ENCODE measurements at regions of chr11 and their contacts with region 1.

Region 1: DNA sequence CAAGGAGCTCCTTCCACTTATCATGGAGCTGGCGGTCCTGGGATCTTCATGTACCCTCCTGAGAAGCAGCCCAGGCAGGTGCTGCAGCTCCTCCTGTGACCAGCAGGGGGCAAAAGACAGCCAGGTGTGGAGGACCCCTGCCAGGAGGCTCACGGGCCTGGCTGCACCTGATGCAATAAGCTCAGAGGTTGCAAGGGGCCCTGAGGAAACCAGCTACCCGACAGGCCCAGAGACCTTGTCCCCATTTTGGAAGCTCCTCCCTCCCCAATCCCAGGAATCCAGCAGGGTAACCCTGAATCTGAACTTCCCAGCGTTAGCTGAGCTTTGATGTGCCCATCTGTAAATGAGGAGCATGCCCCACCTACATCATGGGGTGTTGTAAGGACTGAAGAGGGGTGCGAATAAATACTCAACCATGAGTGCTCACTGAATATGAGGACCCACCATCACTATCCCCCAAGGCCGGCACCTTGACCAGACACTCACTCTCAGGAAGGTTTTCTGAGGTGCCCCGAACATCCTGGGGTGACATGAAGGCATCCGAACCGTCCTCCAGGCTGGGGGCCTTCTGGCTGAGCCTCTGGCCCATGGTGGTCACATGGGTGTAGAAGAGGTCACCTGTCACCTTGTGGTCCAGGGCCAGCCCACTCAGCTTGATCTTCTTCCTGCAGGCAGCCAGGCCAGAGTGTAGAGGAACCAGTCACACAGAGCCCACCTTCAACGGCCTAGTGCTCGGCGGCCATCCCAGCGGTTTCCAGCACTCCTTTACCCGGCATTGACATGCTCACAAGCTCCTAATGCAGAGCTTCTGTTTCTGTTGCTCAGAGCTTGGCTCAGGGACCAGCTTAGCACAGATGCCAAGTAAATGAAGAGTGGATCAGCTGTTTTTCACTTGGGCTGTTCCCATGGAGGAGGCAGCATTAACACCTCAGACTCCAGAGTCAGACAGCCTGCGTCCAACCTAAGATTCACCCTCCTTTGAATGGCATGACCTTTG is 21.7 kb downstream of the SLC43A1 start:
- DNase-seq: peak; percentile 76
- H3K4me3 Mint-ChIP-seq: no peak overlapping the region
- H3K27ac Mint-ChIP-seq: peak overlapping the region; percentile 73
- H3K4me1 Mint-ChIP-seq: peaks cover 12% of the 10 kb centered on the region
- H3K27me3 Mint-ChIP-seq: no peaks in the 10 kb centered on the region

Region 2: DNA sequence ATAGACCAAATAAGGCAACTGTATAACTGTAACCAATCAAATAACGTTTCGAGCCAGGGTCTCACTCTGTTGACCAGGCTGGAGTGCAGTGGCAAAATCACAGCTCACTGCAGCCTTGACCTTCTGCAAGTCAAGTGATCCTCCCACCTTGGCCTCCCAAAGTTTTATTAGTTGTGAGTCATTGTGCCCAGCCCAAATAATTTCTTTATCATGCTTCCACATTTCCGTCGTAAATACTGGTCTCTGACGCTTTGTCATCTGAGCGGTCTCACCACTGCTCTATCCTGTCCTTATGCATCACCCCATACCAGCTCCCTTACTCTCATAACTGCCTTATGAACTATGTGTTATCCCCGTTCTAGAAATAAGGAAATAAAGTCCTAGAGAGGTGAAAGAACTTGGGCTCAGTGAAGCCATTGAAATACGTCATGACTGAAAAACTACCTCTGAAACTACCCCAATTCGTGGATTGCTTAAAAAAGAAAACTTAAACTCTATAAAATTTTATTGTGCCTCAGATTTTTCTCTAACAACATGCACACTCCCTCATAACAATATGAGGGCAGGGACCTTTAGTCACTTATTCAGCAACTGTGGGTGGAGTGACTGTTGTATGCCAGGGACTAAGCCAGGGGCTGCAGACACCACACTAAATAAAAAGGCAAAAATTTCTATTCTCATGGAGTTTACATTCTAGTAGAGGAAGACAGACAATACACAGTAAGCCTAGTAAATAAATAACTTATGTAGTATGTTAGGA is 49.3 kb before region 1 on chr11:
- CTCF ChIA-PET with region 1: interaction called, 11 read pairs
- POLR2A ChIA-PET with region 1: no interaction called
- DNase-seq: no peak
- H3K4me3 Mint-ChIP-seq: no peak overlapping the region
- H3K27ac Mint-ChIP-seq: no peak overlapping the region
- H3K4me1 Mint-ChIP-seq: no peaks in the 10 kb centered on the region
- H3K27me3 Mint-ChIP-seq: peaks cover 16% of the 10 kb centered on the region

Region 3: GRCh38 chr11:57480409-57481137 is 13.2 kb before region 1 on chr11:
- CTCF ChIA-PET with region 1: interaction called, 31 read pairs
- POLR2A ChIA-PET with region 1: no interaction called
- DNase-seq: peak; percentile 81
- H3K4me3 Mint-ChIP-seq: no peak overlapping the region
- H3K27ac Mint-ChIP-seq: no peak overlapping the region
- H3K4me1 Mint-ChIP-seq: peaks cover 12% of the 10 kb centered on the region
- H3K27me3 Mint-ChIP-seq: peaks cover 55% of the 10 kb centered on the region

Region 4: DNA sequence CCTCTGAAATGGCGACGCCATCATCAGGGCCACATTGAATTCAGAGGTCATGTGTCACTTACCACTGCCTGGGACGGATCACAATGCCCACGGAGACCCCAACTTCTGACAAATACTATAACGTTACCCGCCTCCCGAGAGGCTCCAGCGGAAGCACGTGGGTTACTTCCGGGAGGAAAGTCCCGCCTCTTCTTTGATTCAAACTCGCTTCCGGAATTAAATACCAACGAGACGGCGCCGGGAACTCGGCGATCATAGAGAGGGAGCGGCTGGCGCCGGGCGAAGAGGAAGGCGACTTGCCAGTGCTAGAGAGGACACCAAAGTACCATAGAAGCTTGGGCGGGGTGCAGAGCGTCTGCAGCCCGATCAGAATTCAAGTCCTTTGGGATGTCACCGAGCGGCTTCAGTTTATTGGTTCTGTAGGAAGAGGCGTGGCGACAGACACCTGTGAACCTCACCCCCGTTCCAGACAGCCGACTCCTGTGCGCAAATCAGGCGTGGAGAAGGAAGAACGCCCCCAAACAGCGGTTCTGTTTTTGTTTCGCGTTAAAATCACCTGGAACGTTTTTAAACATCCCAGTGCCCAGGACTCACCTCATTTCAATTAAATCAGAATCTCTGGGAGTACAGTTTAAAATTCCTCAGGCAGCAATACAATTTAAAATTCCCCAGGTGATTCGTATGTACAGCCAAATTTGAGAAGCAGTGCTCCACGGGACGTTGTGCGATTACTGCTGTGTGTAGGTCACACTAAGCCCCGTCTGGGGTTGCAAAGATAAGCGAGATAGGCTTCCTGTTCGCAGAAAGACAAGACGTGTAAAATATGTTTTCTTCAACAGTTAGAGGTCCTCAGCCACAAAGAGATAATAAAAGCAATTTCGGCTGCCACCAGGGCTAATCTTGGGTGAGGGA is 37.0 kb after region 1 on chr11 and contains the start of gene TIMM10:
- CTCF ChIA-PET with region 1: interaction called, 296 read pairs
- POLR2A ChIA-PET with region 1: interaction called, 14 read pairs
- DNase-seq: peak; percentile 96
- H3K4me3 Mint-ChIP-seq: peak within 1 kb of the TSS; percentile 84
- H3K27ac Mint-ChIP-seq: peak within 1 kb of the TSS; percentile 90
- H3K4me1 Mint-ChIP-seq: peaks cover 44% of the 10 kb centered on the region
- H3K27me3 Mint-ChIP-seq: no peaks in the 10 kb centered on the region
- total RNA-seq, gene TIMM10: 82.4 to 86.1 TPM

Measured in activated CD4-positive, alpha-beta memory T cell treated with anti-CD3 and anti-CD28 coated beads, Interleukin-2, amount 10 ng/mL, durations not matched to agents 7 days and 5 days (primary cell).